ENCODE measurements at regions of chr13 and their contacts with region 1.

Region 1: GRCh38 chr13:75876360-75877050 is 240.4 kb downstream of the LMO7 start:
- DNase-seq: peak; percentile 46
- ATAC-seq: peak; percentile 90

Region 2: GRCh38 chr13:76014406-76015318 is 138.2 kb after region 1 on chr13:
- intact Hi-C with region 1: loop called (anchors 2 kb)
- DNase-seq: no peak
- ATAC-seq: peak; percentile 80

Region 3: GRCh38 chr13:76473552-76474134 is 597.1 kb after region 1 on chr13:
- intact Hi-C with region 1: loop called (anchors 2 kb)
- DNase-seq: peak; percentile 37
- ATAC-seq: peak; percentile 97

Region 4: GRCh38 chr13:76903544-76904162 is 1027.1 kb after region 1 on chr13:
- intact Hi-C with region 1: loop called (anchors 2 kb)
- DNase-seq: peak; percentile 49
- ATAC-seq: peak; percentile 77